Activated CD4-positive, alpha-beta T cell treated with anti-CD3 and anti-CD28 coated beads, Interleukin-2, amount 10 ng/mL, durations not matched to agents 24 days and 14 days (primary cell): ENCODE measurements at regions of chr9 and their contacts with region 1.

Region 1: DNA sequence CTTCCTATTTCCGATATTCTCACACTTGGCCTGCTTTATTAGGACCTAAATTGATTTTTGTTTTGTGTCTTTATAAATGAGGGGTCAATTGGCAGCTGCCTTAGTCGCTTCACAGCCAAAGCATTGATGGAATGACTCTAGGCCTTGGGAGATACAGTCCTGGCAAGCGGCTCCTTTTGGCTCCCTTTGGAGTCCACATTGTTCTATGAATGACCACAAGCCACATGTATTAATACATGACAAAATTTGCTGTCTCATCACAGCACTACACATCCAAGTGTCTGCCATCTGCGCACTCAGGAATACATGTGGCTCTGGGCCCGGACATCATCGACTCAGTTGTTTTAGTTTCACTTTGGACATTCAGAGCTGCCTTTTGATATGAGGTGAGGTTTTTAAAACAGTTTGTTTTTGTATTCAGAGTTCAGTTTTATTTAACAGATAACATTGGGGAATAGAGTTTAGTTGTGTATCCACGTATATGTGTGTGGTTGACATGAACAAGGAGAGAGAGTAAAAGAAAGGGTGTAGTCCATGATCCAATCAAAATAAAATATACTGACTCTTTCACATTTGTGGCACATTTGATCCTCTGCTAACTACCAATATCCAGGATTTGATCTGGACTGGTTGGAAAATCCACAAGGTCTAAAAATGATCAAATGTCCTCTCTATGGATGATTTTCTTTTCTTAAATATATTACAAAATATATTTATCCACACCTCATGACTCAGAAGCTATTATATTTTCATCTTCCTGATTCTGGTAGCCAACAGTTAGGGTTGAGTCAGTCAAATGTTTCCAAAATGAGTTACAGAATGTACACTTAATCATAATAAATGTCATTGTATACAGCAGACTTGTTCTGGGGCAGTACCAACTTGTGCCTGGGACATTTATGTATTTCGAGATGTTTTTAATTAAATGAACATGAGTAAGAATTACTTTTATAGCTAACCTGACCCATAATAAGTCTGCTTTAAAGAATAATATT is 114.0 kb upstream of the MTAP start:
- DNase-seq: no peak
- H3K4me3 Mint-ChIP-seq: no peak overlapping the region
- H3K27ac Mint-ChIP-seq: no peak overlapping the region
- H3K4me1 Mint-ChIP-seq: peaks cover 24% of the 10 kb centered on the region
- H3K27me3 Mint-ChIP-seq: peaks cover 15% of the 10 kb centered on the region

Region 2: DNA sequence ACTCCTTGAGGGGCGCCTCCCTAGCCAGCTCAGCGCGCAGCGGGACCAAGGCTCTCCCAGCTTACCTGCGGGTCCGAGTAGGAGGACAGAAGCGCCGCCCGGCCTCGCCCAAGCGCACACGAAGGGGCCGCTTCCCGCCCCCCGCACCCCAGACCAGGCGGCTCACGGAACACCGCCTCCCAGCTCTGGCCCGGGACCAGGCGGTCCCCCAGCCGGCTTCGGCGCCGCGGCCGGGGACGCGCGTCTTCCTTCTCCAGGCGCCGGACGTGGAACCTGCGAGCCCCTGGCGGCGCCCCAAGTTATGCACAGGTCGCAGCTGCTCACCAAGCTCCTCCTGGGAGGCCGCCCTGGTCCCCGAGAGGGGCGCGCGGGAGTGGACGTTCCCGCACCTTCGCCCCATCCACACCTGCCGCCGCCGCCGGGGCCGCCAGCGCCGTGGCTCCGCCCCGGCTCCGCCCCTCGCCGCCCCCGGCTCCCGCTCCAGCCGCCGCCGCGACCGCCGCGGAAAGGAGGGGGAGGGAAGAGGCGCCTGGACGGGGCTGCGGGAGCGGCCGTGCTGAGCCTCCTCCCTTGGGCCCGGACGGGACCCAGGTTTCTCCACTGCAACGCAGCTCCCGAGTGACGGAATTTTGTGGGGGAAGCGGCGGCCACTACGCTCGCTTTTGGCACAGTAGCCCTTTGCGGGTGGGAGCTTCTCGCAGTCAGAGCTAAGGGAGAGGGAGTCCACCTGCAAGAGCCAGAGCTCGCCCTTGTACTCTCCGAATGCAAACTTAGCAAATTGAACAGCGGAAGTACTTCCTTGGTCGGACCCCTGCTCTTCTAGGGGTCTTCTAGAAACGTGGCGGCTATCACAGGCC is 128.8 kb before region 1 on chr9:
- intact Hi-C with region 1: loop called (anchors 2 kb)
- DNase-seq: peak; percentile 84
- H3K4me3 Mint-ChIP-seq: peak overlapping the region; percentile 85
- H3K27ac Mint-ChIP-seq: no peak overlapping the region
- H3K4me1 Mint-ChIP-seq: peaks cover 17% of the 10 kb centered on the region
- H3K27me3 Mint-ChIP-seq: peaks cover 60% of the 10 kb centered on the region

Region 3: DNA sequence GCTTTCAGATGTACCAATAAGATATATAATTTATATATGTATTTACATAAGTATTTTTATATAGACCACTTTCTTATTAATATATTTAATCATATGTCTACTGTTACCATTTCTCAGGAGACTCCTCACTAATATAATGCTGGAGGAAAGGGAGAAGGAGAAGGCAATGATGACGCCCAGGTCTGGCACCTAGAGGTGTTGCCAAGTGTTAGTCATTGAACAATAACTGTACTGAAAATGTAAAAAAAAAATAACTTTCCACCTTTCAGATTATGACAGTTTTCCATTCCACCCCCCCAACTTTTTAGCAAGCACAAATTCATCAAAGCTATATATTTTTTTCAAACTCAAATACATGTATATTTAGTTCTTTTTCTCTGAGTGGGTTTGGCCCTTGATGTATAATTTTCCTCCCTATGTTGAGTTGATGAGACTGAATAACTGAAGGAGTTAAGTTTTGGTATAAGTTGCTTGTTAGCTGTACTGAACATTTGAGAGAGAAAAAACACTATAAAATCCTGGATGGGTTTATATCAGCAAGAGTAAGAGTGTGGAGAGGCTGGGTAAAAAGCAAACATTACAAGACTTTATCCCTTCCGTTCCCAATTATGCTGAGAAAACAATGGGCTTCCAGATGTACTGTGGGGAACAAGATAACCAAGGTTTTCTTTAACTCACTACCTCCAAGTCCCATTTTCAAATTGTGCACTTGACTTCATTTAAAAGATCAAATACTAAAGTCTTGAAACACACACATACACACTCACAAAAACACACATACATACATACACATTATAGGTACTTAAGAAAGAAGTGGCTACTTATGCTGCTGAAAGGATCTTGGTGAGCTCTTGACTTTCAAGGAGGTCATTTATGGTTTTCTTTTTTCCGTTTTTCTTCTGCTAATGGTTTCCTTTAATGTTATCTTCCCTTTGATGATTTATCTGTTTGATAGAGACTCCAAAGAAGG is 63.4 kb before region 1 on chr9:
- intact Hi-C with region 1: loop called (anchors 5 kb)
- DNase-seq: no peak
- H3K4me3 Mint-ChIP-seq: no peak overlapping the region
- H3K27ac Mint-ChIP-seq: peak overlapping the region; percentile 42
- H3K4me1 Mint-ChIP-seq: peaks cover 13% of the 10 kb centered on the region
- H3K27me3 Mint-ChIP-seq: no peaks in the 10 kb centered on the region

Region 4: DNA sequence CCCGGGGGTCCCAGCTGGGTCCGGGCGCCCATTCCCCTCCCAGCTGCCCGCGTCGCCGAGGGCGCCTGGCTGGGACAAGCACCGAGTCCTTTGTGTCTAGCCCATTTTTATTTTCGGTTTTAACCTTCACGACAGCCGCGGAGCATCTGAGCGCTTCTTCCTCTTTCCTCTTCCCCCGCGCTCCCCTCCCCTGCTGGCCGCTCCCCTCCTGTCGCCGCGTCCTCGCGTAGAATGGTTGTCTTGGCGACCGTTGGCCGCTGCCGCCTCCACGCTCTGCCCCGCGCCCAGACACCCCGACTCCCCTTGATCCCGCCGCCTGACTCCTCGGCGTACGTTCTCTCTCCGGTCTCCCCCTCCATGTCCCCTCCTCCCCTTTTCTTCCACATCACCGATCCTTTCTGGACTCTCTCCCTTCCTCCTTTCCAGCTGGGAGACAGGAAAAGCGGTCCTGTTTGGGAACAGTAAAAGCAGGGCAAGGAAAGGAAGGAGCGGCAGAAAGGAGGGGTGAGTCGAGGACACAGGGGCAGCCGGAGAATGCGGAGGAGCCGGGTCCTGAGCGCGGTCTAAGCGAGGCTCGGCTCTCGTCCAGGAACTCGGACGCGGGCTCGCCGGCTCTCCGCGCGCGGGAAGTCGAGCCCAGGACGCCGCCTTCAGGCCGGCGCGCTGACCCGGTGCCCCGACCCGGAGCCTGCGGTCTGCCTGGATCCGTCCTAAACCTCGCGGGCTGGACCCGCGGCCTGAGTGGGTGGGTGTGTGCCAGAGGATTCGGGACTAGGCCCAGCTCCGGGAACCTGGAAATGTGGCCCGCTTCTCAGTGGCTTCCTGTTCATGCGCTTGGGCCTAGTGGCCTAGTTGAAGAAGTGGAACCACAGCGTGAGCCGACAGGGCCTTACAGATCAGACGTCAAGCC is 307.0 kb after region 1 on chr9:
- intact Hi-C with region 1: no loop called
- DNase-seq: peak; percentile 95
- H3K4me3 Mint-ChIP-seq: peak overlapping the region; percentile 88
- H3K27ac Mint-ChIP-seq: peak overlapping the region; percentile 95
- H3K4me1 Mint-ChIP-seq: peaks cover 29% of the 10 kb centered on the region
- H3K27me3 Mint-ChIP-seq: peaks cover 51% of the 10 kb centered on the region